ENCODE measurements at regions of chrX and their contacts with region 1.

Region 1: DNA sequence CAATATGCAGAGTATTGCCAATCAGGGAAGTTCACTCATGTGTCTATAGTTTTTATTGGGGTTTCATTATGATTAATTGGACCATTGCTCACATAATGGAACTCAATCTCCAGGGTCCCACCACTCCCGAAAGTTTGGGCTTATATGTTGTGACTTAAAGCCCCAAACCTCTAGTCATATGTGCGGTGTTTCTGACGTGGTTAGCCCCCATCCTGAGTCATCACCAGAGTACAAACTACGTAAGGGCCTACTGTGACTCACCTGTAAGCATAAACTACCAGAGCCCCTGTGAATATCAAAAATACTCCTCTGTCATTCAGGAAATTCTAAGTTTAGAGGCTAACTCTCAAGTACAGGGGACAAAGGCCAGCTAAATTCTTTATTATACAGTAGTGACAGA is 5.4 kb downstream of the YIPF6 start:
- DNase-seq: peak; percentile 81
- ATAC-seq: peak; percentile 89
- H3K4me3 Mint-ChIP-seq: no peak overlapping the region
- H3K27ac Mint-ChIP-seq: peak overlapping the region; percentile 86
- H3K4me1 Mint-ChIP-seq: peaks cover 67% of the 10 kb centered on the region
- H3K27me3 Mint-ChIP-seq: no peaks in the 10 kb centered on the region

Region 2: GRCh38 chrX:67734111-67734753 is 770.0 kb before region 1 on chrX:
- CTCF ChIA-PET with region 1: no interaction called
- POLR2A ChIA-PET with region 1: no interaction called
- intact Hi-C with region 1: no loop called
- DNase-seq: no peak
- ATAC-seq: no peak
- H3K4me3 Mint-ChIP-seq: no peak overlapping the region
- H3K27ac Mint-ChIP-seq: no peak overlapping the region
- H3K4me1 Mint-ChIP-seq: no peaks in the 10 kb centered on the region
- H3K27me3 Mint-ChIP-seq: no peaks in the 10 kb centered on the region

Region 3: DNA sequence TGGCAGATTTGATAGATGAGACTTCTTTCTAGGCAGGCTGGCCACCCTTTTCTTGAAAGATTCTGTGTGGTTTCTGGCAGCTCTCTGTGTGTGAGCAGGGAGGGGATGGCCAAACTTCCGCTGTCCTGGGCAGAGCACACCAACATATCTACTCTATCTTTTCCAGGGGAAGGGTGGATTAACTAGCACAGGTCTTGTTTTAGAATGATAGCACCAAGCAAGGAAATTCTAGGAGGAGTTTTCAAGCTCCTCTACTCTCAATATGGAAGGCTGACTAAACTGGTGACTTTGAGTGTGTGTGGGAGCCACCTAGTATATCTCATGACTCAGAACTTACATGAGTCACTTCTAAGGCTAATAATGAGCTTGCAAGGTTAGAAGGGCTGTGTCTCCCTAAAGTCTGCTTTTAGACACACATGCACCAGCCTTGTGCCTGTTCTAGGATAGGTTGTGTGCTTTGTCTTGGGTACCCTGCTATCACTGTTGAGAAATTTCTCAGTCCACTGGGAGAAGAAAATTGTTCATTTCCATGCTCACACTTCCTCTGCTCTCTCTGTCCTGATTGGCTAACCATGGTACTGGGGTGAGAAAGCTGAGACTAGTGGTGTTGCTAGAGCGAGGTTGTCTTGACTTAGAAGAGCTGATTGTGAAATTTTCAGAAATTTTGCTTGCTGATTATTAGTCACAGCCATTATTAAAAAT is 67.5 kb after region 1 on chrX:
- CTCF ChIA-PET with region 1: no interaction called
- POLR2A ChIA-PET with region 1: no interaction called
- intact Hi-C with region 1: loop called (anchors 1 to 2 kb)
- DNase-seq: peak; percentile 25
- ATAC-seq: peak; percentile 83
- H3K4me3 Mint-ChIP-seq: no peak overlapping the region
- H3K27ac Mint-ChIP-seq: no peak overlapping the region
- H3K4me1 Mint-ChIP-seq: peaks cover 44% of the 10 kb centered on the region
- H3K27me3 Mint-ChIP-seq: no peaks in the 10 kb centered on the region

Region 4: DNA sequence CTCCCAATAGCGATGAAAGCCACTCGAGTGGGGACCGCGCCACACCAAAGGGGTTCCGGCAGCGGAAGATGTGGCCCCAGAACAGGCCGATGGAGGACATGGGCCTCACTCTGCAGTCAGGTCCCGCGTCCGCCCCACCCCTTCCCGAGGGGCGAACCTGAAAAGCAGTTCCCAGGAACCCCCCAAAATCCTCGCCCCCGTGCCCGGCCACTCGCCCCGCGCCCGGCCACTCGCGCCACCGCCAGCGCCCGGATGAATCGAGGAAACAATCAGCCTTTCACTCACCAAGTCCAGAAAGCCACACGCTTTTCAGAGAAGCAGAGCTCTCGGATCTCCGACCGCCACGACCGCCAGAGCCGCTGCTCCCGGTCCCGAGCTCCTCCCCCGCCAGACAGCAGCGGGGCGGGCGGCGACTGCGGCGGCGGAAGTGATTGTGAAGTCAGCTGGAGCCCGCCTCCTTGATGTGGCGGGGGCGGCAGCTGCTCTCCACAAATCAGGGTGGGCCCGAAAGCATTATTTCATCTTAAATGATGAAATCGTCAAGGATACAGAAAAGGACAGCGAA is 660.9 kb after region 1 on chrX and contains the start of gene PJA1:
- CTCF ChIA-PET with region 1: no interaction called
- POLR2A ChIA-PET with region 1: no interaction called
- intact Hi-C with region 1: loop called in 1 of 2 experiments (anchors 5 kb)
- DNase-seq: peak; percentile 86
- ATAC-seq: peak; percentile 82
- H3K4me3 Mint-ChIP-seq: peak within 1 kb of the TSS; percentile 79
- H3K27ac Mint-ChIP-seq: peak within 1 kb of the TSS; percentile 83
- H3K4me1 Mint-ChIP-seq: peaks cover 29% of the 10 kb centered on the region
- H3K27me3 Mint-ChIP-seq: no peaks in the 10 kb centered on the region
- total RNA-seq, gene PJA1: 18.9 to 19.5 TPM

Measured in activated CD4-positive, alpha-beta T cell treated with anti-CD3 and anti-CD28 coated beads for 36 hours (primary cell).